H1 (cell line): ENCODE measurements at regions of chr1 and their contacts with region 1.

Region 1: DNA sequence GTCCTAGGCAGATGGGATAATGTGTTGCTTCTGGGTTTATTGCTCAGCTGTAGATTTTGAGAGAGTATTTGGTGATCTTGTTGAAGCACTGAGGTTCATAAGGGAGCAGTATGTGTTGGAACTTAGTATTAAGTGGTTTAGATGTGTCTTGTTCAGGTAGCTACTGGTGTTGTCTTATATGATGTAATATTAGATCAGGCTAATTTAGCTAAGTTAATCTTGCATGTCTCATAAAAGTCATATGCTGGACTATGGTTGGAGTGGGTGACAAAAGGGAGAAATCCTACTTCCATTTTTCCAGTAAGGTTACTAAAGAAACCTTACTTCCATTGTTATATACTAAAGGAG is 196.4 kb downstream of the CLEC20A start:
- DNase-seq: no peak
- H3K4me3 ChIP-seq: no peak overlapping the region
- H3K27ac ChIP-seq: no peak overlapping the region
- H3K4me1 ChIP-seq: peaks cover 0 to 2% (median 0%) of the 10 kb centered on the region in 4 experiments; a peak in 3 of 7 replicates
- H3K27me3 ChIP-seq: no peaks in the 10 kb centered on the region
- CTCF ChIP-seq: no peak
- EP300 ChIP-seq: no peak
- POLR2A ChIP-seq: no peak
- RAD21 ChIP-seq: no peak

Region 2: DNA sequence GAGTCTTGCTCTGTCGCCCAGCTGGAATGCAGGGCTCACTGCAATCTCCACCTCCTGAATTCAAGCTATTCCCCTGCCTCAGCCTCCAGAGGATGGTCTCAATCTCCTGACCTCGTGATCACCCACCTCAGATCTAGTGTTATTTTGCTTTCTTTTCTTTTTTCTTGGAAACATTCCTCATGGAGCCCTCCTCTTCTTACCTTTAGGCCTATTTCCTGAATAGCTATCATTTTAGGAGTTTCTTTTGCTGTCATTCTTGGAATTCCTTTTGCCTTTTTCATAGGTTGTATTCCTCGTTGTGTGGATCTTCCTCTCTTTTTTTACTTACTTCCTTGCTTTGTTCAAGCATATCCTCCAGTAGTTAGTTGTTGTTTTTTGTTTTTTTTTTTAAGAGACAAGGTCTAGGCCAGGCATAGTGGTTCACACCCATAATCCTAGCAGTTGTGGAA is 32.7 kb before region 1 on chr1:
- CTCF ChIA-PET with region 1: interaction called, 13 read pairs
- POLR2A ChIA-PET with region 1: interaction called, 5 read pairs
- DNase-seq: peak in 1 of 2 experiments; percentile 51
- H3K4me3 ChIP-seq: peak overlapping the region in 1 of 4 experiments; percentile 54; a peak in 4 of 8 replicates
- H3K27ac ChIP-seq: peak overlapping the region; percentile 50
- H3K4me1 ChIP-seq: peaks cover 6 to 36% (median 21%) of the 10 kb centered on the region in 4 experiments; a peak in 6 of 7 replicates
- H3K27me3 ChIP-seq: no peaks in the 10 kb centered on the region
- CTCF ChIP-seq: no peak
- EP300 ChIP-seq: no peak
- POLR2A ChIP-seq: no peak
- RAD21 ChIP-seq: no peak; a peak in 1 of 4 replicates

Region 3: DNA sequence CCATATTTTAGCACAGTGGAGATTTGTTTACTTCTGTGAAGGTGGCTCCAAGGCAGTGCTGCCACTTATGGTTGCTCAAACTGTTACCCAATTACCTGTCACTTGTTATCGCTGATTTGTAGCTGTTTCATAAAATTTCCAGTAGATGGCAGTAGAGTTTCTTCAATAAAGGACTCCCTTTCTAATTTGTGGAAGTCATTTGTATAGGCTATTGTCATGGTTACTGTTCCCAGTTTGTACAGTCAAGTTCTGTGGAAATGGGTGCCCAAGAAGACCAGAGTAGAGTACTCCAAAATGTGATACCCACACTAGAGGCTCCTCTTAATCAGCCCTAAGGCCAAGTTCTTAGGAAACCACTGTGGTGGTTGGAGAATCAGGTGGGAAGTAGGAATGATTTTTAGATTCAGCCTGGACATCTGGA is 10.4 kb after region 1 on chr1:
- CTCF ChIA-PET with region 1: interaction called, 28 read pairs
- POLR2A ChIA-PET with region 1: interaction called, 3 read pairs
- DNase-seq: no peak
- H3K4me3 ChIP-seq: no peak overlapping the region
- H3K27ac ChIP-seq: no peak overlapping the region
- H3K4me1 ChIP-seq: no peaks in the 10 kb centered on the region; a peak in 2 of 7 replicates
- H3K27me3 ChIP-seq: no peaks in the 10 kb centered on the region
- CTCF ChIP-seq: peak in 2 of 3 experiments; percentile 63 to 74; a peak in 2 of 4 replicates
- EP300 ChIP-seq: no peak
- POLR2A ChIP-seq: no peak
- RAD21 ChIP-seq: peak; percentile 83 to 85

Region 4: GRCh38 chr1:178379807-178380206 is 79.5 kb after region 1 on chr1:
- CTCF ChIA-PET with region 1: interaction called, 14 read pairs
- POLR2A ChIA-PET with region 1: no interaction called
- DNase-seq: peak in 1 of 2 experiments; percentile 91
- H3K4me3 ChIP-seq: no peak overlapping the region
- H3K27ac ChIP-seq: no peak overlapping the region
- H3K4me1 ChIP-seq: peaks cover 0 to 3% (median 0%) of the 10 kb centered on the region in 4 experiments; a peak in 1 of 7 replicates
- H3K27me3 ChIP-seq: no peaks in the 10 kb centered on the region
- CTCF ChIP-seq: peak; percentile 77 to 92 (median 78)
- EP300 ChIP-seq: no peak
- POLR2A ChIP-seq: no peak
- RAD21 ChIP-seq: peak; percentile 53 to 66

Region 5: GRCh38 chr1:178532392-178532791 is 232.1 kb after region 1 on chr1:
- CTCF ChIA-PET with region 1: interaction called, 25 read pairs
- POLR2A ChIA-PET with region 1: no interaction called
- DNase-seq: peak; percentile 54 to 94
- H3K4me3 ChIP-seq: no peak overlapping the region; a peak in 1 of 8 replicates
- H3K27ac ChIP-seq: no peak overlapping the region
- H3K4me1 ChIP-seq: peaks cover 0 to 2% (median under 1%) of the 10 kb centered on the region in 4 experiments; a peak in 1 of 7 replicates
- H3K27me3 ChIP-seq: no peaks in the 10 kb centered on the region; a peak in 1 of 7 replicates
- CTCF ChIP-seq: peak; percentile 89 to 96 (median 94)
- EP300 ChIP-seq: no peak
- POLR2A ChIP-seq: no peak
- RAD21 ChIP-seq: peak; percentile 96 to 97